ENCODE measurements at regions of chr2 and their contacts with region 1.

Region 1: GRCh38 chr2:47354013-47354847 is 48.7 kb upstream of the MSH2 start:
- DNase-seq: no peak
- ATAC-seq: peak; percentile 60; the same call in 1 of the 2 replicates
- H3K4me3 ChIP-seq: no peak overlapping the region
- H3K27ac ChIP-seq: peak overlapping the region; percentile 27; the same call in 1 of the 2 replicates
- H3K4me1 ChIP-seq: peaks cover 7% of the 10 kb centered on the region; the same call in 1 of the 2 replicates
- H3K27me3 ChIP-seq: no peaks in the 10 kb centered on the region
- CTCF ChIP-seq: no peak

Region 2: GRCh38 chr2:46923041-46923528 is 431.1 kb before region 1 on chr2:
- CTCF ChIA-PET with region 1: no interaction called
- POLR2A ChIA-PET with region 1: interaction called, 11 read pairs
- in situ Hi-C with region 1: no loop called
- intact Hi-C with region 1: no loop called
- DNase-seq: no peak
- ATAC-seq: no peak
- H3K4me3 ChIP-seq: no peak overlapping the region
- H3K27ac ChIP-seq: no peak overlapping the region
- H3K4me1 ChIP-seq: no peaks in the 10 kb centered on the region
- H3K27me3 ChIP-seq: no peaks in the 10 kb centered on the region
- CTCF ChIP-seq: no peak